ENCODE measurements at regions of chr18 and their contacts with region 1.

Region 1: DNA sequence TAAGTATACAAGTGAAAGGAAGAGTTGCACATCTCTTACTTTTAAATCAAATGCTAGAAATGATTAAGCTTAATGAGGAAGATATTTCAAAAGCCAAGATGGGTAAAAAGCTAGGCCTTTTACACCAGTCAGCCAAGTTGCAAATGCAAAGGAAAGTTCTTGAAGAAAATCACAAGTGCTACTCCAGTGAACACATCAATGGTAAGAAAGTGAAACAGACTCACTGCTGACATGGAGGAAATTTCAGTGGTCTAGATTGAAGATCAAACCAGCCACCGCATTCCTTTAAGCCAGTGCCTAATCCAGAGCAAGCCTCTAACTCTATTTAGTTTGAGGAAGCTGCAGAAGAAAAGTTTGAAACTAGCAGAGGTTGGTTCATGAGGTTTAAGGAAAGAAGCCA is 79.1 kb downstream of the RBBP8 start:
- DNase-seq: no peak
- H3K4me3 ChIP-seq: no peak overlapping the region
- H3K27ac ChIP-seq: no peak overlapping the region
- H3K4me1 ChIP-seq: no peaks in the 10 kb centered on the region
- H3K27me3 ChIP-seq: no peaks in the 10 kb centered on the region
- CTCF ChIP-seq: no peak

Region 2: GRCh38 chr18:22856870-22857269 is 155.4 kb before region 1 on chr18:
- CTCF ChIA-PET with region 1: no interaction called
- dilution Hi-C with region 1: no loop called
- in situ Hi-C with region 1: no loop called
- intact Hi-C with region 1: no loop called
- DNase-seq: peak; percentile 96
- H3K4me3 ChIP-seq: no peak overlapping the region
- H3K27ac ChIP-seq: peak overlapping the region; percentile 96
- H3K4me1 ChIP-seq: peaks cover 26% of the 10 kb centered on the region
- H3K27me3 ChIP-seq: no peaks in the 10 kb centered on the region
- CTCF ChIP-seq: no peak

Region 3: GRCh38 chr18:22952525-22952924 is 59.7 kb before region 1 on chr18:
- CTCF ChIA-PET with region 1: no interaction called
- dilution Hi-C with region 1: no loop called
- in situ Hi-C with region 1: loop called in 1 of 2 experiments (anchors 10 kb)
- intact Hi-C with region 1: no loop called
- DNase-seq: no peak
- H3K4me3 ChIP-seq: no peak overlapping the region
- H3K27ac ChIP-seq: no peak overlapping the region
- H3K4me1 ChIP-seq: no peaks in the 10 kb centered on the region
- H3K27me3 ChIP-seq: no peaks in the 10 kb centered on the region
- CTCF ChIP-seq: no peak

Region 4: GRCh38 chr18:22964116-22964515 is 48.1 kb before region 1 on chr18:
- CTCF ChIA-PET with region 1: no interaction called
- dilution Hi-C with region 1: loop called (anchors 5 kb)
- in situ Hi-C with region 1: loop called in 1 of 2 experiments (anchors 10 kb)
- intact Hi-C with region 1: no loop called
- DNase-seq: no peak
- H3K4me3 ChIP-seq: no peak overlapping the region
- H3K27ac ChIP-seq: no peak overlapping the region
- H3K4me1 ChIP-seq: peaks cover 12% of the 10 kb centered on the region
- H3K27me3 ChIP-seq: no peaks in the 10 kb centered on the region
- CTCF ChIP-seq: no peak